ENCODE measurements at regions of chr6 and their contacts with region 1.

Region 1: GRCh38 chr6:44190715-44191114 is 26.0 kb upstream of the MYMX start:
- DNase-seq: peak; percentile 27
- ATAC-seq: peak; percentile 87
- H3K4me3 ChIP-seq: no peak overlapping the region
- H3K27ac ChIP-seq: no peak overlapping the region
- H3K4me1 ChIP-seq: peaks cover 12% of the 10 kb centered on the region
- H3K27me3 ChIP-seq: no peaks in the 10 kb centered on the region
- CTCF ChIP-seq: no peak
- EP300 ChIP-seq: no peak
- POLR2A ChIP-seq: no peak
- RAD21 ChIP-seq: no peak

Region 2: DNA sequence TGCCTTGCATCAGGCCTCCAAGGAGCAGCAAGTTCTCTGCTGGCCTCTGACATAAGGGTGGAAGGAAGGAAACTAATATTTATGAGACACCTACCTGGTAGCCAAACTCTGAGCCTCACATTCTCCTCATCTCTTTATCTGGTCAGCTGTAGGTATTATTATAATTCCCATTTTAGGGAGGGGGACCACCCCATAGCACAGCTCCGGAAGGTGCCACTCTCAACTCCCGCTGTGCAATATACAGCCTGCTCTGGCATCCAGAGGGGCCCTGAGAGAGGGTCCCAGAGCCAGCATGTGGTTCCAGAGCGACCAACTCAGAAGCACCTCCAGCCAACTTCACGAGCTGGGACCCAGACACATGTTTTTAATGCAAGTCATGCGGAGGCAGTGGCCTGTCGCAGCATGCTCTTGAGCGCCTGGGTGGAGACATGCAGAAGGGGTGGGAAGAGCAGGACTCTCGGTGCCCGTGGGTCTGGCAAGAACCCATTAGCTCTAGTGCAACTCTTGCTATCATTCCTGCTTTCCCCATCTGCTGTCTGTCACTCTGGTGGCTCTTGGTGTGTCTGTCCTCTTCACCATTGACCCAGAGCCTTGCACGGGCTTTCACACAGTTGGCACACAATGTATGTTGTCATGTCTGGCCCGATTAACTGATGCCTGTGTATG is 11.1 kb after region 1 on chr6:
- CTCF ChIA-PET with region 1: interaction called, 6 read pairs
- POLR2A ChIA-PET with region 1: no interaction called
- RAD21 ChIA-PET with region 1: interaction called, 4 read pairs
- SMC1A ChIA-PET with region 1: interaction called, 11 read pairs
- in situ Hi-C with region 1: no loop called
- intact Hi-C with region 1: no loop called
- DNase-seq: no peak
- ATAC-seq: no peak
- H3K4me3 ChIP-seq: no peak overlapping the region
- H3K27ac ChIP-seq: no peak overlapping the region
- H3K4me1 ChIP-seq: no peaks in the 10 kb centered on the region
- H3K27me3 ChIP-seq: no peaks in the 10 kb centered on the region
- CTCF ChIP-seq: no peak
- EP300 ChIP-seq: no peak
- POLR2A ChIP-seq: no peak
- RAD21 ChIP-seq: no peak

Region 3: DNA sequence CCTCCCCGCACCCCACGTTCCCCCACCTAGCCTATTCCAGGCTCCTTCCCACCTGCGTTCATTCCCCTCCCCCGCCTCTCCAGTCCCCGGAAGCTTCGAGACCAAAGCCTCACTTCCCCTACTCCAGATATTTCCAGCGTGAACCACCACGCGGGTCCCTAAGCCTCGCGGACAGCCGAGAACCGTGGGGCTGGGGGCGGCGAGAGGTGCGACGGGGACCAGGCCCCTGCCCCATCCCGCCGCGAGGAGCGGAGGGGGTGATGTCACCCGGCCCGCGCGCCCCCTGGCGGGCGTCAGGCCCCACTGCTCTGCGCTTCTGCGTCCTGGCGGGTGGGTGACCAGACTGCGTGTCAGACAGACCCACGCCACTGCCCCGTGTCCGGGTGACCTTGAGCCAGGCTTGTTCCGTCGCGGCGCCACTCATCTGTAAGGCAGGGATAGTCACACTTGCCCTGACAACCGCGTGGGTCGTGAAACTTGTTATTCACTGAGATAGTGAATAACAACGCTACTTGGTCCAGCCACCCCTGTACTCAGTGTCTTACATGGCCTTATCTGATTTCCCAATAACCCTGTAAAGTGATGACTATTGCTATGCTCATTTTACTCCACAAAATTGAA is 47.2 kb after region 1 on chr6:
- CTCF ChIA-PET with region 1: interaction called, 12 read pairs
- POLR2A ChIA-PET with region 1: no interaction called
- RAD21 ChIA-PET with region 1: no interaction called
- SMC1A ChIA-PET with region 1: interaction called, 5 read pairs
- in situ Hi-C with region 1: no loop called
- intact Hi-C with region 1: no loop called
- DNase-seq: no peak
- ATAC-seq: peak; percentile 97
- H3K4me3 ChIP-seq: peak overlapping the region; percentile 54; the same call in 1 of the 2 replicates
- H3K27ac ChIP-seq: peak overlapping the region; percentile 71
- H3K4me1 ChIP-seq: peaks cover 8% of the 10 kb centered on the region
- H3K27me3 ChIP-seq: no peaks in the 10 kb centered on the region
- CTCF ChIP-seq: peak; percentile 91 to 95 (median 94)
- EP300 ChIP-seq: no peak
- POLR2A ChIP-seq: peak; percentile 83
- RAD21 ChIP-seq: peak; percentile 53